BJ (cell line): ENCODE measurements at regions of chr5 and their contacts with region 1.

Region 1: GRCh38 chr5:75433814-75434506 is 77.5 kb downstream of the CERT1 start:
- DNase-seq: no peak
- H3K4me3 ChIP-seq: no peak overlapping the region
- H3K27me3 ChIP-seq: no peaks in the 10 kb centered on the region
- CTCF ChIP-seq: no peak

Region 2: DNA sequence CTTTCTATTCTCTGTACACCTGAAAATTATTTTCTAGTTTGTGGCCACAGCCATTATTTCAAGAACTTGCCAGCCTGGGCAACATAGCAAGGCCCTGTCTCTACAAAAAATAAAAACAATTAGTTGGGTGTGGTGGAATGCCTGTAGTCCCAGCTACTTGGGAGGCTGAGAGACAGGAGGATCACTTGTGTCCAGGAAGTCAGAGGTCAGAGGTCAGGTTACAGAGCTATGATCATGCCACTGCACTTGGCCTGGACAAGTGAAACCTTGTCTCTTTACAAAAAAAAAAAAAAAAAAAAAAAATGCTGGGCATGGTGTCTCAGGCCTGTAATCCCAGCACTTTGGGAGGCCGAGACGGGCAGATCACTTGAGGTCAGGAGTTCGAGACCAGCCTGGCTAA is 38.7 kb before region 1 on chr5:
- CTCF ChIA-PET with region 1: no interaction called
- POLR2A ChIA-PET with region 1: no interaction called
- DNase-seq: no peak
- H3K4me3 ChIP-seq: no peak overlapping the region
- H3K27me3 ChIP-seq: no peaks in the 10 kb centered on the region
- CTCF ChIP-seq: no peak

Region 3: DNA sequence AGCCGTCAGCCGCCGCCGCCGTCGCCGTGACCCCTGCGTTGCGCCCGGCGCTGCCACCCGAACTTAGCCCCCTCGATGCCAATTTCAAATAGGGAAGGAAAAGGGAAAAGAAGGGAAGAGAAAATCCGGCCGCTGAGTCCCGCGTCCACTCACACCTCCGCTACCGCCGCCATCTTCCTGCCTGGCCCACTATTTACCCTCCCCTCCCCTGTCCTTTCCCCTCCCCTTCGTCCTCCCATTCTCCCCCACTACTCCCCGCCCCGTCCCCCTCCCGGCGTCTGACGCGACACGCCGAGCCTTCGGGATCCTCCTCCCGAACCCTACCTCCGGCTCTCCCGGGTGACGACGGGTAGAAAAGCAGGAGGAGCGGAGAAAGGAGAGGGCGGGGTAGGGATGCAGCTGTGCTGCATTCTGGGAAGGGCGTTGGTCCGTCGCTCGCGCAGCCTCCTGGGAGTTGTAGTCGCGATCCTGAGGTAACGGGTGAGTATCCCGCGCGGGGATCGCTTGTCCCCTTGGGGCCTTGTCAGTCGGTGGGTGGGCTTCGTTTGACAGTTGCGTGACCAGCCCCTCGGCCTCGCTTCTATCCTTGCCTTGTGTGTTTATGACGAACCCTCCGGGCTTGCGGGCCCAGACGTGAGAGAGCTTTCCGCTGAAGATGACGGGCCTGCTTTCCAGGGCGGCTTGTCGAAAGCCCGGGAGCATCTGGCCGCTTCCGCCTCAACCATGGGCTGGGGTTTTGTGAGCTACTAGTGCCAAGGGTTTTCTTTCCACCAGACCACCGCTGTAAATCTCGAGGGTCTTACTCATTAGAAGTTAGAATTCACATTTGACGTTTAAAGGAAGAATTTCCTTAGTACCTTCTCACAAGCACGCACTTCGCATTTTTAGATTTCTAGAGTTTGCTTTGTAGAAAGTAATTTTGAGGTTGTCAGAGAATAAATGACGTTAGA is 77.8 kb after region 1 on chr5 and contains the starts of genes CERT1 and POLK:
- CTCF ChIA-PET with region 1: no interaction called
- POLR2A ChIA-PET with region 1: interaction called, 13 read pairs
- DNase-seq: peak; percentile 94
- H3K4me3 ChIP-seq: peak within 1 kb of the TSS; percentile 91
- H3K27me3 ChIP-seq: no peaks in the 10 kb centered on the region
- CTCF ChIP-seq: no peak
- polyA plus RNA-seq, gene CERT1: 4.5 and 9.5 TPM in 2 replicates
- polyA plus RNA-seq, gene POLK: 11.8 and 26.1 TPM in 2 replicates